ENCODE measurements at regions of chr7 and their contacts with region 1.

Region 1: GRCh38 chr7:11212080-11212711 is 238.5 kb downstream of the PHF14 start:
- DNase-seq: peak; percentile 24
- H3K4me3 Mint-ChIP-seq: no peak overlapping the region
- H3K27ac Mint-ChIP-seq: no peak overlapping the region
- H3K4me1 Mint-ChIP-seq: peaks cover 12% of the 10 kb centered on the region
- H3K27me3 Mint-ChIP-seq: no peaks in the 10 kb centered on the region

Region 2: GRCh38 chr7:10939911-10940703 is 272.1 kb before region 1 on chr7:
- intact Hi-C with region 1: loop called (anchors 1 kb)
- DNase-seq: peak; percentile 82
- H3K4me3 Mint-ChIP-seq: no peak overlapping the region
- H3K27ac Mint-ChIP-seq: no peak overlapping the region
- H3K4me1 Mint-ChIP-seq: peaks cover 14% of the 10 kb centered on the region
- H3K27me3 Mint-ChIP-seq: no peaks in the 10 kb centered on the region

Region 3: DNA sequence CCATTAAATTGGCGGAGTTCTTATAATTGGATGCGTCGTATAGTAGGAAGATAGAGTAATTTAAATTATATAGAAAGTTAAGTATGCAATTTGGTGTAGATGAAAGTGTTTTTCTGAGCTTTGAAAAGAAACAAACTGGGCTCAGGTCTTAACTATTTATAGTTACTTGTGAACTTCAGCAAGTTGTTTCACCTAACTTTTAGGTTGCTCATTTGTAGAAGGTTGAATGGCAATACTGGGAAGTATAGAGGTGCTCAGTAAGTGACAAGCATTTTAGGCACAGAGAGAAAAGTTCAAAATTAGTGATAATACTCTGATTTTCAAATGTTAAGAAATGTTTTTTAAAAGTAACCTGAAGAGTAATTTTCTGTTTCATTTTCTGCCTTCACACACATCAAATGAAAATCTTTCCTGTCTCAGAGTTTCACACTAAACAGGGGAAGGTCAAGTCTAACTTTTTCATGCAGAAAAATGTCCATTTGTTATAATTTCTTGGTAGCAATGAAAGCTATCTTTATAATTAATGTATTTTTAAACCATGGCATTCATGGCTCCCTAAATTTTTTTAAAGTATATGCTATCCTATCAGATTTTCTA is 92.0 kb before region 1 on chr7:
- intact Hi-C with region 1: loop called (anchors 2 kb)
- DNase-seq: no peak
- H3K4me3 Mint-ChIP-seq: peak overlapping the region; percentile 37
- H3K27ac Mint-ChIP-seq: peak overlapping the region; percentile 79
- H3K4me1 Mint-ChIP-seq: peaks cover 40% of the 10 kb centered on the region
- H3K27me3 Mint-ChIP-seq: no peaks in the 10 kb centered on the region

Region 4: DNA sequence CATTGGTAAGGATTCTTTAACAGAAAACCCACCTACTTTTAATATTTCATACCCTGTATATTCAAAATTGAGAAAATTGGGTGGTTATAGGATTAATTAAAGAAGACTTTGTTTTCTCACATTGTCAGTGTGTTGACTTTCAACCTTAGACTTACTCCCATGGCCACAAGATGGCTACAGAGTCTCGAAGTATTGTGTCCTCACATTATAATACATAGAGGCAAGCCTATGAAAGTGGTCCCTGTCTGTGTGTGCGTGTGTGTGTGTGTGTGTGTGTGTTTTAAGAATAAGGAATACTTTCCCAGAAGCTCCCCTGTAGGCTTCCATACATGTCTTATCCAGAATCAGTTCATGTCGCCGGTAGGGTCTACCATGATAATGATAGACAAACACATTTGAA is 58.5 kb before region 1 on chr7:
- intact Hi-C with region 1: loop called (anchors 5 kb)
- DNase-seq: no peak
- H3K4me3 Mint-ChIP-seq: no peak overlapping the region
- H3K27ac Mint-ChIP-seq: no peak overlapping the region
- H3K4me1 Mint-ChIP-seq: peaks cover 1% of the 10 kb centered on the region
- H3K27me3 Mint-ChIP-seq: no peaks in the 10 kb centered on the region